ENCODE measurements at regions of chr4 and their contacts with region 1.

Region 1: GRCh38 chr4:94595879-94596483 is 144.2 kb downstream of the PDLIM5 start:
- DNase-seq: peak; percentile 60
- ATAC-seq: peak; percentile 31; the same call in 1 of the 2 replicates
- H3K4me3 ChIP-seq: no peak overlapping the region
- H3K27ac ChIP-seq: no peak overlapping the region
- H3K4me1 ChIP-seq: 0 out of 2 replicates have a peak, but pooled peaks cover 8% of the 10 kb centered on the region
- H3K27me3 ChIP-seq: no peaks in the 10 kb centered on the region
- CTCF ChIP-seq: peak; percentile 82

Region 2: GRCh38 chr4:94304365-94304971 is 291.5 kb before region 1 on chr4:
- CTCF ChIA-PET with region 1: no interaction called
- POLR2A ChIA-PET with region 1: no interaction called
- intact Hi-C with region 1: loop called (anchors 1 kb)
- DNase-seq: peak; percentile 60
- ATAC-seq: peak; percentile 61
- H3K4me3 ChIP-seq: no peak overlapping the region
- H3K27ac ChIP-seq: no peak overlapping the region
- H3K4me1 ChIP-seq: no peaks in the 10 kb centered on the region
- H3K27me3 ChIP-seq: no peaks in the 10 kb centered on the region
- CTCF ChIP-seq: peak; percentile 83

Region 3: GRCh38 chr4:94406668-94407437 is 189.1 kb before region 1 on chr4:
- CTCF ChIA-PET with region 1: interaction called, 3 read pairs
- POLR2A ChIA-PET with region 1: no interaction called
- intact Hi-C with region 1: loop called (anchors 1 kb)
- DNase-seq: peak; percentile 85
- ATAC-seq: peak; percentile 73
- H3K4me3 ChIP-seq: no peak overlapping the region
- H3K27ac ChIP-seq: no peak overlapping the region
- H3K4me1 ChIP-seq: peaks cover 6% of the 10 kb centered on the region
- H3K27me3 ChIP-seq: no peaks in the 10 kb centered on the region
- CTCF ChIP-seq: peak; percentile 83

Region 4: GRCh38 chr4:94548571-94548970 is 47.4 kb before region 1 on chr4:
- CTCF ChIA-PET with region 1: no interaction called
- POLR2A ChIA-PET with region 1: no interaction called
- intact Hi-C with region 1: loop called (anchors 5 kb)
- DNase-seq: peak; percentile 86
- ATAC-seq: peak; percentile 81
- H3K4me3 ChIP-seq: peak overlapping the region; percentile 15; the same call in 1 of the 2 replicates
- H3K27ac ChIP-seq: peak overlapping the region; percentile 72
- H3K4me1 ChIP-seq: peaks cover 57% of the 10 kb centered on the region
- H3K27me3 ChIP-seq: no peaks in the 10 kb centered on the region
- CTCF ChIP-seq: no peak

Region 5: GRCh38 chr4:94653984-94654609 is 58.1 kb after region 1 on chr4:
- CTCF ChIA-PET with region 1: no interaction called
- POLR2A ChIA-PET with region 1: no interaction called
- intact Hi-C with region 1: no loop called
- DNase-seq: no peak
- ATAC-seq: no peak
- H3K4me3 ChIP-seq: no peak overlapping the region
- H3K27ac ChIP-seq: no peak overlapping the region
- H3K4me1 ChIP-seq: peaks cover 17% of the 10 kb centered on the region; the same call in 1 of the 2 replicates
- H3K27me3 ChIP-seq: no peaks in the 10 kb centered on the region
- CTCF ChIP-seq: no peak

Measured in PC-3 (cell line).